Astrocyte of the cerebellum (primary cell): ENCODE measurements at regions of chr2 and their contacts with region 1.

Region 1: GRCh38 chr2:79929624-79930023 is 374.9 kb downstream of the LRRTM1 start:
- DNase-seq: no peak
- H3K4me3 ChIP-seq: no peak overlapping the region
- CTCF ChIP-seq: no peak

Region 2: GRCh38 chr2:79993144-79993543 is 63.5 kb after region 1 on chr2:
- in situ Hi-C with region 1: loop called (anchors 5 kb)
- DNase-seq: peak; percentile 11
- H3K4me3 ChIP-seq: no peak overlapping the region
- CTCF ChIP-seq: no peak